ENCODE measurements at regions of chr2 and their contacts with region 1.

Region 1: GRCh38 chr2:70301344-70302194 is at the start of gene FAM136A:
- DNase-seq: peak; percentile 78 to 95 (median 86)
- ATAC-seq: peak; percentile 89
- H3K4me3 ChIP-seq: peak within 1 kb of the TSS; percentile 68
- H3K4me3 Mint-ChIP-seq: peak within 1 kb of the TSS; percentile 92
- H3K27ac ChIP-seq: peak within 1 kb of the TSS; percentile 60 to 82
- H3K27ac Mint-ChIP-seq: peak within 1 kb of the TSS; percentile 83
- H3K4me1 ChIP-seq: peaks cover 25% of the 10 kb centered on the region
- H3K4me1 Mint-ChIP-seq: peaks cover 22% of the 10 kb centered on the region
- H3K27me3 ChIP-seq: no peaks in the 10 kb centered on the region
- H3K27me3 Mint-ChIP-seq: no peaks in the 10 kb centered on the region
- CTCF ChIP-seq: peak; percentile 81
- total RNA-seq, gene FAM136A: 30.6 to 31.4 TPM

Region 2: DNA sequence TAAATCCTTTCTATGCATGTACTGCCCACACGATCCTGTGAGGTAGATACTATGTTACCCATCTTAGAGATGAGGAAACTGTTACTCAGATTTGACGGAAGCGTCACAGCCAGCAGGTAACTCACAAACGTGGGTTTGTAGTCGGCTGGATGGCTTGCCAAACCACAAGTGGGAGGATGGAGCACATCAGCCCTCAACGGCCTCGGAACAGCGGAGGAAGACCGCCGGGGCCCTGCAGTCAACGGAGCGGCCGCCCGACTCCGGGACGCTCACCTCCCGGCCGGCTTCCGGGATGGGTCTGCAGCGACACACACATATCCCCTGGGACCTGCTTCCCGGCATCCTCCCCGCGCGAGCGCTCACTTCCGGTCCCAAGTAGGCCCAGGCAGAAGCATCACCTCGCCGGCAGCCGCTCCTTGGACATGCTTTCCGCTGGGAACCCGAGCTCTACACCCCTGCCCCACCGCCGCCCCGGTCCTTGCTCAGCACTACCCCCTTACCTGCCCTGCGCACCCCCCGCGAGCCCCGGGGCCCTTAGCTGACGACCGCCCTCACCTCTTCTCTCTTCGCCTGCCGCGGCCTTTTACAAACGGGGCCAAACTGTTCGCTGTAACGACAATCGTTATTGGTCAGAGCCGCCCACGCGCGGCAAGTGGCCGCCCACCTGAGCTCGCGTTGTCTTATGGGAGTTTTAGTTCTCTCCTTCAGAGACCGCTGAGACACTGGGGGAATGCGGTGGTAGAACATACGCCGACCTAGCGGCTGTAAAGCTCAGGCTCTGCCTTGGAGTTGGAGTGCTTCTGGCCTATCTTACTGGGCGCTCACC is 110.9 kb before region 1 on chr2 and contains the start of gene C2orf42:
- CTCF ChIA-PET with region 1: interaction called, 6 read pairs
- POLR2A ChIA-PET with region 1: interaction called, 6 read pairs
- intact Hi-C with region 1: loop called (anchors 2 to 5 kb)
- DNase-seq: peak; percentile 89 to 98 (median 92)
- ATAC-seq: peak; percentile 81
- H3K4me3 ChIP-seq: peak within 1 kb of the TSS; percentile 88
- H3K4me3 Mint-ChIP-seq: peak within 1 kb of the TSS; percentile 91
- H3K27ac ChIP-seq: peak within 1 kb of the TSS; percentile 95 to 98
- H3K27ac Mint-ChIP-seq: peak within 1 kb of the TSS; percentile 95
- H3K4me1 ChIP-seq: peaks cover 7% of the 10 kb centered on the region
- H3K4me1 Mint-ChIP-seq: peaks cover 12% of the 10 kb centered on the region
- H3K27me3 ChIP-seq: no peaks in the 10 kb centered on the region
- H3K27me3 Mint-ChIP-seq: no peaks in the 10 kb centered on the region
- CTCF ChIP-seq: peak; percentile 21
- total RNA-seq, gene C2orf42: 16.9 to 18.4 TPM

Region 3: DNA sequence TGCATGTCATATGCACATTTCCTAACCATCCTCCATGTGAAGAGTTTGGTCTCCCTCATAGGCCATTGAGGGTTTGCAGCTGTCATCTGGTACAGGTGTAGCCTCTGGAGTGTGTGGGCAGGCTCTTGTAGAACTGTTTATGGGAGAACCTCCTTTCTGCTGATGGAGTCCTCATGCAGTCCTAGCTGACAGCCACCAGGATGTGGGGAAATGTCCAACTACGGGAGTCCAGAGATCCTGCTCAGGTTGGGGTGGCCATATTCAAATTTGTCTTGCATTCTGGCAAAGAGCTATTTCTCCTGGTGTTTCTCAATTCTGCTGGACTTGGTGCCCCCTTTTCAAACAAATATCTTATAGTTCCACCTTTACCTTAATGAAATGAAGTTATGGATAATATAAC is 31.7 kb after region 1 on chr2:
- CTCF ChIA-PET with region 1: no interaction called
- POLR2A ChIA-PET with region 1: no interaction called
- intact Hi-C with region 1: no loop called
- DNase-seq: no peak
- ATAC-seq: no peak
- H3K4me3 ChIP-seq: no peak overlapping the region
- H3K4me3 Mint-ChIP-seq: no peak overlapping the region
- H3K27ac ChIP-seq: no peak overlapping the region
- H3K27ac Mint-ChIP-seq: no peak overlapping the region
- H3K4me1 ChIP-seq: no peaks in the 10 kb centered on the region
- H3K4me1 Mint-ChIP-seq: no peaks in the 10 kb centered on the region
- H3K27me3 ChIP-seq: no peaks in the 10 kb centered on the region
- H3K27me3 Mint-ChIP-seq: no peaks in the 10 kb centered on the region
- CTCF ChIP-seq: no peak

Region 4: DNA sequence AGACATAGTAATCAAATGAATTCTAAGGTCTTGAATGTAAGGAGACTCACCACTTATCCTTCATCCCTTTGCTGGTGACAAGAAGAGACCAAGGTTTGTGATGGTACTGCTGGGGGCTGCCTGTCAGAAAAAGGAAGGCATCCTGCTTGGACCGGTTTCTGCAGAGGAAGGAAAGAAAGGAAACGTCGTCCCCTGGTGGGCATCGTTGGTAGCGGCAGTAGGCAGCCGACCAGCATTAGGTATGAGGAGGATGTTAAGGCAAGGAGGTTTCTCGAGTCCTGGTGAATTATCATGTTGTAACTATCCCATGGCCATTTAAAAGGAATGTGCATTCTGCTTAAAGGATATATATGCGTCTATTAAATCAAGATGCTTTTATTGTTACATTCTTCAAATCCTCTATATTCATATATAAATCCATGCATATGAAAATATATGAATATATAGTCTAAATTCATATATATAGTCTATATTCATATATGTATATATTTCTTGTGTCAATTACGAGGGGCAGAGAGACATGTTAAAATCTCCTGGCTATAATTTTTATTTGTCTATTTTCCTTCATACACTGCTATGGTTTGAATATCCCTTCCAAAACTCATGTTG is 346.4 kb after region 1 on chr2:
- CTCF ChIA-PET with region 1: interaction called, 8 read pairs
- POLR2A ChIA-PET with region 1: interaction called, 7 read pairs
- intact Hi-C with region 1: loop called (anchors 1 kb)
- DNase-seq: peak; percentile 63 to 85 (median 72)
- ATAC-seq: peak; percentile 91
- H3K4me3 ChIP-seq: no peak overlapping the region
- H3K4me3 Mint-ChIP-seq: no peak overlapping the region
- H3K27ac ChIP-seq: no peak overlapping the region
- H3K27ac Mint-ChIP-seq: no peak overlapping the region
- H3K4me1 ChIP-seq: no peaks in the 10 kb centered on the region
- H3K4me1 Mint-ChIP-seq: peaks cover 5% of the 10 kb centered on the region
- H3K27me3 ChIP-seq: peaks cover 0 to 2% of the 10 kb centered on the region in 2 experiments
- H3K27me3 Mint-ChIP-seq: peaks cover 4% of the 10 kb centered on the region
- CTCF ChIP-seq: peak; percentile 96

Region 5: GRCh38 chr2:70871398-70872211 is 570.0 kb after region 1 on chr2:
- CTCF ChIA-PET with region 1: no interaction called
- POLR2A ChIA-PET with region 1: no interaction called
- intact Hi-C with region 1: loop called in 1 of 2 experiments (anchors 10 kb)
- DNase-seq: peak; percentile 59 to 88 (median 74)
- ATAC-seq: peak; percentile 92
- H3K4me3 ChIP-seq: no peak overlapping the region
- H3K4me3 Mint-ChIP-seq: no peak overlapping the region
- H3K27ac ChIP-seq: no peak overlapping the region
- H3K27ac Mint-ChIP-seq: no peak overlapping the region
- H3K4me1 ChIP-seq: peaks cover 11% of the 10 kb centered on the region
- H3K4me1 Mint-ChIP-seq: peaks cover 5% of the 10 kb centered on the region
- H3K27me3 ChIP-seq: peaks cover 35 to 48% of the 10 kb centered on the region in 2 experiments
- H3K27me3 Mint-ChIP-seq: peaks cover 61% of the 10 kb centered on the region
- CTCF ChIP-seq: peak; percentile 83

Region 6: DNA sequence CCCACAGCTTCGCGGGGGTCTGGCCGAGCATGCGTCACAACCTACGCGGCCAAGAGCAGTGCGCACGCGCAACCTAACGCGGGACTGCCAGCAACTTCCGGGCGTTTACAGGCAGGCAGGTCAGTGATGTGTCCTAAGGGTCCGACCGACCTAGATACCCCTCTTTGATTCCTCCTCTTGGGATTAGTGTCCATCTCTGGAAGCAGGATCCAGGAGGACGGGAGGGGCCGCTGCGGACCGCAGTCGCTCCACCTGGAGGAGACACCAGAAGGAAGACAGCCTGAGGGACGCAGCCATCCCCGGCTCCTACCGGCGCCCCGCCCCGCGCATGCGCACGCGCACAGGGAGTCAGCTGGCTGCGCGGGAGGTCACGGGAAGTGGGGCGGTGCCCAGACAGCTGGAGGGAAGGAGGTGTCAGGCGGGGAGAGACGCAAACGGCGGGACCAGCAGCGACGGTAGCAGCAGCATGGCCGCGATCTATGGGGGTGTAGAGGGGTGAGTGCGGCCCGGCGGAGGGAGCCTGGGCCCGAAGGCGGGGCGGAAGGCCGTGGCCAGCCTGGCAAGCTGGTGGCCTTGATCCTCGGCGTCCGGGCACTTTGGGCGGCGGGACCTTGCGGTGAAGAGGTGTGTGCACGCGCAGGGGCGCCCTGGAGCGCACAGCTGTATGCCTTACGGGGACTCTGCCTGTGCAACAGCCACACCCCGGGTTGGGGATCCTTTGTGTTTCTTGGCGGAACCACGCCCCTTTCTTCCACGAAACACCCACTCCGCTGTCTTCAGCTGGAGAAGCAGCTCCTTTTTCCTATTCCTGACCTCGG is 766.9 kb after region 1 on chr2 and contains the start of gene NAGK:
- CTCF ChIA-PET with region 1: no interaction called
- POLR2A ChIA-PET with region 1: no interaction called
- intact Hi-C with region 1: loop called in 1 of 2 experiments (anchors 2 kb)
- DNase-seq: peak; percentile 94 to 99 (median 97)
- ATAC-seq: peak; percentile 78
- H3K4me3 ChIP-seq: peak within 1 kb of the TSS; percentile 97
- H3K4me3 Mint-ChIP-seq: peak within 1 kb of the TSS; percentile 99
- H3K27ac ChIP-seq: peak within 1 kb of the TSS; percentile 91 to 98
- H3K27ac Mint-ChIP-seq: peak within 1 kb of the TSS; percentile 99
- H3K4me1 ChIP-seq: peaks cover 56% of the 10 kb centered on the region
- H3K4me1 Mint-ChIP-seq: peaks cover 68% of the 10 kb centered on the region
- H3K27me3 ChIP-seq: no peaks in the 10 kb centered on the region
- H3K27me3 Mint-ChIP-seq: no peaks in the 10 kb centered on the region
- CTCF ChIP-seq: no peak
- total RNA-seq, gene NAGK: 62.3 to 73.3 TPM

Measured in CD4-positive, alpha-beta T cell (primary cell).